Dendritic cell treated with granulocyte-macrophage colony-stimulating factor and Interleukin-4, amounts not matched to agents 40 ng/mL and 50 ng/mL, for 4 days (primary cell): ENCODE measurements at regions of chr9 and their contacts with region 1.

Region 1: GRCh38 chr9:121498150-121498486 is 1.5 kb downstream of the GGTA1 start:
- H3K4me3 Mint-ChIP-seq: peak overlapping the region; percentile 98
- H3K27ac Mint-ChIP-seq: peak overlapping the region; percentile 97
- H3K4me1 Mint-ChIP-seq: peaks cover 59% of the 10 kb centered on the region
- H3K27me3 Mint-ChIP-seq: no peaks in the 10 kb centered on the region

Region 2: DNA sequence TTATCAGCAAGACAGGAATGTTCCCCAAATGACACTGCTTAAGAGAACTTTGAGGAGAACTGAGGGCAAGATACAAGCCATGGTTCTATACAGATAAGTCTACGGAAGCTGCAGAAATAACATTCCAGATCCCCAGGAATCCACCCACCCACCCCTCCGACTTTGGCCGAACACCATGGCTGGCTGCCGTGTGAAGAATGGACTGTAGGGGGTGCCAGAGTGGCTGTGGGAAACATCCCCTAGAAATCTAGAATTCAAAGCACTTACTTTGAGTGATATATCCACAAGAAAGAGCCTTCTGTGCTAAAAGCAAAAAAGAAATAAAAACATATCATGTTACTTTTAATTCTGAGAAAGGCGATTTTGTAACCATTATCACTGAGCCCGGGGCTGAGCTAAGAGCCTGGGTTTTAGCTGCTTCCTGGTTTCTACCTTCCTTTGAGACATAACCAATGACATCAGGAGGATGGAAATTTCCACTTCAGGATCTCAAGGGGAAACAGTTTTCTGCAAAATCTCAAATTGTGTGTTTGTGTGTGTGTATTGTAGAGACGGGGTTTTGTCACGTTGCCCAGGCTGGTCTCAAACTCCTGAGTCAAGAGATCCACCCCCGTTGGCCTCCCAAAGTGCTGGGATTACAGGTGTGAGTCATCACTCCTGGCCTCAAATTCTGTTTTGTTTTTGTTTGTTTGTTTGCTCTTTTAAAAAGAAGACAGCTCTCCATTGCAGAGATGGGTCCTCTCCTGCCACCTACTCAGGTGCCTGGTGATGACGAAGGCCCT is 34.9 kb before region 1 on chr9:
- intact Hi-C with region 1: loop called (anchors 5 kb)
- H3K4me3 Mint-ChIP-seq: no peak overlapping the region
- H3K27ac Mint-ChIP-seq: no peak overlapping the region
- H3K4me1 Mint-ChIP-seq: peaks cover 31% of the 10 kb centered on the region
- H3K27me3 Mint-ChIP-seq: no peaks in the 10 kb centered on the region

Region 3: GRCh38 chr9:121485623-121486022 is 12.5 kb before region 1 on chr9:
- intact Hi-C with region 1: loop called (anchors 2 kb)
- H3K4me3 Mint-ChIP-seq: peak overlapping the region; percentile 61
- H3K27ac Mint-ChIP-seq: peak overlapping the region; percentile 94
- H3K4me1 Mint-ChIP-seq: peaks cover 68% of the 10 kb centered on the region
- H3K27me3 Mint-ChIP-seq: no peaks in the 10 kb centered on the region

Region 4: DNA sequence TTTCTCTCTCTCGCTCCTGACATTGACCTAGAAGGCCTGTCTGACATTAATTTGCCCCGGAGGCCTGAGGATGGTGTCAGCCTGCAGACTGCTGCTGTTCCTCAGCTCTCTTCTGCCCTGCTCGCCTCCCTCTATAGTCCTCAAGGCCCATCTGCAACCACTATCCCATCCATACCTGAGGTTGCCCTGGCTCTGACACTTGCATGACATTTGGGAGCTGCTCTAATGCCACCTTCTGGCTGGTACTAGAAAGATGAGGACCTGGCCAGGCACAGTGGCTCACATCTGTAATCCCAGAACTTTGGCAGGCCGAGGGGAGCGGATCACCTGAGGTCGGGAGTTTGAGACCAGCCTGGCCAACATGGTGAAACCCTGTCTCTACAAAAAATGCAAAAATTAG is 40.1 kb after region 1 on chr9:
- intact Hi-C with region 1: loop called (anchors 2 kb)
- H3K4me3 Mint-ChIP-seq: no peak overlapping the region
- H3K27ac Mint-ChIP-seq: no peak overlapping the region
- H3K4me1 Mint-ChIP-seq: peaks cover 23% of the 10 kb centered on the region
- H3K27me3 Mint-ChIP-seq: peaks cover 17% of the 10 kb centered on the region

Region 5: DNA sequence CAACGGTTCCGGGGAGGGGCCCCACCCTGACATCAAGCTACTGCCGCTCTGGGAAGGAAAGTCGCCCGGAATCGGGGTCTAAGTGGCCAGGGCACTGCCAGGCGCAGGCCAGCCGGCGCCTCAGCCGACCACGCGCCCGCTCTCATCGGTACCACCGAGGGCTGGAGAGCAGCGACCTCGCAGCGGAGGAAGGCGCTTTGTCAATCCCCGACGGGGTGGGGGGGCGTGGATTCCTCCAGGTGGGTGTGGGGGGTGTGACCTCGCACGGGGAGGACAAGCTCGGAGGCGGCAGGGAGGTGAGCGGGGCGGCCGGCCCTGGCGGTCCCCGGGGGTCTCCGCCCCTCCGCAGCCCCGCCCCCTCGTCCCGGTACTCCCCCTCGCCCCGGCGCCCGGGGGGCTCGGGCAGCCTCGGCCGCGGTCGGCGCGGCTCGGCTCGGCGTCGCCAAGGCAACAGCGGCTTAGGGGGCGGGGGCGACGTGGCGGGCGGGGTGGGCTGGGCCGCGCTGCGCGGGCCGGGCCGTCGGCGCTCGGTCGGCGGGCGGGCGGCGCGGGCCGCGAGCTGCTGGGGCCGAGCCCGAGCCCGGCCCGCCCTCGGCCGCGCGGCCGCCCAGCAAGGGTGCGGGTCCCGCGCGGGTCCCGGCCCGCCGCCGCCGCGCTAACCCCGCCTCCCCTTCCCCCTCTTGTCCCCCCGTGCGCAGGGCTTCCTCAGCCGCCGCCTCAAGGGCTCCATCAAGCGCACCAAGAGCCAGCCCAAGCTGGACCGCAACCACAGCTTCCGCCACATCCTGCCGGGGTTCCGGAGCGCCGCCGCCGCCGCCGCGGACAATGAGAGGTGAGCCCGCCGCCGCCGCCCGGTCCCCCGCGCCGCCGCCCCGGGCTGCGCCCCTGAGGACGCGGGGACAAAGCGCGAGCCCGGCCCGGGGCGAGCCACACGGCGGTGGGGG is 200.8 kb after region 1 on chr9:
- intact Hi-C with region 1: no loop called
- H3K4me3 Mint-ChIP-seq: peak overlapping the region; percentile 53
- H3K27ac Mint-ChIP-seq: no peak overlapping the region
- H3K4me1 Mint-ChIP-seq: peaks cover 27% of the 10 kb centered on the region
- H3K27me3 Mint-ChIP-seq: peaks cover 84% of the 10 kb centered on the region